Mammary epithelial cell (primary cell): ENCODE measurements at regions of chrX and their contacts with region 1.

Region 1: DNA sequence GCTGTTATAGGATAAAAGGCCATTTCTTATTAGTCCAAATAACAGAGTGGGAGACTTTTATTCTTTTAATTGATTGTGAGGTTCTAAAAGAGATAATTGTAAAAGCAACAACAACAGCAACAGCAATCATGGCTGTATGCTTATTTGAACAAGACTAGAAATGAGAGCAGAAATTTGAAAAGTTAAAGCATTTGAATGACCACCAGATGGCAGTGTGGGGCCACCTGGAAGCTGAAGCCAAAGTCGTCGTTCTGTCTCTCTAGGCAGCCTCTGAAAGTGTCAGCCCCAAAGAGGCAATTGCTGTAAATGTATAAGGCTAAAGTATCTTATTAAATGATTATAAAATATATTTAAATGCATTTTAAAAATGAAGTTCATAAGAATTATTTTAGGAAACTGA is 42.2 kb downstream of the SH2D1A start:
- DNase-seq: peak; percentile 31
- H3K4me3 ChIP-seq: no peak overlapping the region
- H3K27ac ChIP-seq: no peak overlapping the region
- H3K4me1 ChIP-seq: no peaks in the 10 kb centered on the region
- H3K27me3 ChIP-seq: no peaks in the 10 kb centered on the region
- CTCF ChIP-seq: peak; percentile 59 to 77

Region 2: GRCh38 chrX:124098089-124098488 is 290.5 kb before region 1 on chrX:
- CTCF ChIA-PET with region 1: no interaction called
- dilution Hi-C with region 1: no loop called
- in situ Hi-C with region 1: no loop called
- intact Hi-C with region 1: loop called (anchors 10 kb)
- DNase-seq: peak; percentile 8
- H3K4me3 ChIP-seq: no peak overlapping the region
- H3K27ac ChIP-seq: no peak overlapping the region
- H3K4me1 ChIP-seq: no peaks in the 10 kb centered on the region
- H3K27me3 ChIP-seq: no peaks in the 10 kb centered on the region
- CTCF ChIP-seq: peak; percentile 58

Region 3: DNA sequence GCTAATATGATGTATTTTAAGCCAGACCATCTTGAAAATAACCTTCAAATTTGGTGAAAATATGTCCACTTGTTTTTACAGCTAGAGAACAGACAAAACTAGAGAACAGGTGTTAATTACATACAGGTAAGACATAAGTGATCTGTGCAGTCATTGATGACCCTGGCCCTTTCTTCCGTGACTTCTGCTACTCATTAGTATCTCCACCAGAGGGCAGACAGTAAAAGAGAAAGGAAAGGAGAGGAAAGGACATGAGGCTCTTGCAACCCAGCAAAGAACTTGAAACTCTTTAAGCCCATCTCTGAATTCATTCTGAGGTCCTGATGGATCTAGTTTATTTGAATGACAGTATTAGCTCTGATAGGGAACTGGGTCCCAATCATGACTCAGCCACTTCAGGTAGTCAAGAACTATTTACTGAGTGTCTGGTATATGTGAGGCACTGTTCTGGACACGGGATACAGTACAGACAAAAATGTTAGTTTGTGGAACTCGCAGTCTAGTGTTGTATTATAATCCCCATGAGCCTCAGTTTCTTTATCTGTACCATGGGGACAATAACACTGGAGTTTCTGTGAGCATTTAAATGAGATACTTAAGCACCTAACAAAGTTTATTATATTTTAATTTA is 177.1 kb before region 1 on chrX:
- CTCF ChIA-PET with region 1: no interaction called
- dilution Hi-C with region 1: no loop called
- in situ Hi-C with region 1: loop called in 1 of 2 experiments (anchors 25 kb)
- intact Hi-C with region 1: loop called (anchors 2 kb)
- DNase-seq: peak; percentile 44
- H3K4me3 ChIP-seq: no peak overlapping the region
- H3K27ac ChIP-seq: no peak overlapping the region
- H3K4me1 ChIP-seq: peaks cover 4% of the 10 kb centered on the region
- H3K27me3 ChIP-seq: no peaks in the 10 kb centered on the region
- CTCF ChIP-seq: peak; percentile 53 to 72

Region 4: DNA sequence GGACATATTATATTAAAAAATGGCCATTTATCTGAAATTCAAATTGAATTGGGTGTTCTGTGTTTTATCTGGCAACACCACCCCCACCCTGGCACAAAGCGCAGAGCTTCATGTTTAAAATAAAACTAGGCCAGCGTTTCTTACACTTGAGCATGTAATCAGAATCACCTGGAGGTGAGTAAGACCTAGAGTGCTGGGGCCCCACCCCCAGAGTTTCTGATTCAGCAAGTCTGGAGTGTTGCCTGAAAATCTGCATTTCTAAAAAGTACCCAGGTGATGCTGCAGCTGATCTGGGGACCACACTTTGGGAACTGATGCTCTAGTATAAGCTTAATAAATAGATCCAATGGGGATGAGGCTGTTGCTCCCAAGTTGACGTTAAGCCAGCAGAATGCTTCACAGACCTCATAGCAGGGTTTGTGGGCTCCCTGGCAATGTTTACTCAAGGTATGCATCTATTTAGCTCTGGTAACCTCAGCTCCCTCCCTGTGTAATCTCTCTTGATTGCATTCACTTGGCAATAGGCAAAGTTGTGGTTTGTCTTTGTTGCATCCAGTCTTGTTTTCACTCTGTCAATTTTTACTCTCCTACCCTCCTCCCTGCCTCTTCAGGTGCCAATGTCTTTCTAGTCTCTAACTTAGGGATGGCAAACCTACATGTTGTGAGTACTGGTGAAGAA is 155.9 kb before region 1 on chrX:
- CTCF ChIA-PET with region 1: no interaction called
- dilution Hi-C with region 1: no loop called
- in situ Hi-C with region 1: no loop called
- intact Hi-C with region 1: no loop called
- DNase-seq: peak; percentile 57
- H3K4me3 ChIP-seq: no peak overlapping the region
- H3K27ac ChIP-seq: no peak overlapping the region
- H3K4me1 ChIP-seq: no peaks in the 10 kb centered on the region
- H3K27me3 ChIP-seq: no peaks in the 10 kb centered on the region
- CTCF ChIP-seq: no peak

Region 5: GRCh38 chrX:124406294-124407014 is 17.9 kb after region 1 on chrX:
- CTCF ChIA-PET with region 1: no interaction called
- dilution Hi-C with region 1: no loop called
- in situ Hi-C with region 1: no loop called
- intact Hi-C with region 1: loop called (anchors 1 kb)
- DNase-seq: peak; percentile 81
- H3K4me3 ChIP-seq: no peak overlapping the region
- H3K27ac ChIP-seq: no peak overlapping the region
- H3K4me1 ChIP-seq: peaks cover 7% of the 10 kb centered on the region
- H3K27me3 ChIP-seq: no peaks in the 10 kb centered on the region
- CTCF ChIP-seq: peak; percentile 67 to 71